ENCODE measurements at regions of chr10 and their contacts with region 1.

Region 1: GRCh38 chr10:50511492-50512213 is 112.1 kb downstream of the SGMS1 start:
- DNase-seq: peak; percentile 43 to 98
- H3K4me3 ChIP-seq: no peak overlapping the region
- H3K27ac ChIP-seq: peak overlapping the region; percentile 95
- H3K4me1 ChIP-seq: peaks cover 46% of the 10 kb centered on the region
- H3K27me3 ChIP-seq: no peaks in the 10 kb centered on the region
- CTCF ChIP-seq: no peak

Region 2: GRCh38 chr10:49362596-49363260 is 1148.9 kb before region 1 on chr10:
- CTCF ChIA-PET with region 1: no interaction called
- POLR2A ChIA-PET with region 1: no interaction called
- intact Hi-C with region 1: no loop called
- DNase-seq: no peak
- H3K4me3 ChIP-seq: no peak overlapping the region
- H3K27ac ChIP-seq: no peak overlapping the region
- H3K4me1 ChIP-seq: no peaks in the 10 kb centered on the region
- H3K27me3 ChIP-seq: peaks cover 61% of the 10 kb centered on the region
- CTCF ChIP-seq: no peak

Region 3: GRCh38 chr10:50349554-50349953 is 162.1 kb before region 1 on chr10:
- CTCF ChIA-PET with region 1: no interaction called
- POLR2A ChIA-PET with region 1: no interaction called
- intact Hi-C with region 1: no loop called
- DNase-seq: no peak
- H3K4me3 ChIP-seq: no peak overlapping the region
- H3K27ac ChIP-seq: no peak overlapping the region
- H3K4me1 ChIP-seq: no peaks in the 10 kb centered on the region
- H3K27me3 ChIP-seq: no peaks in the 10 kb centered on the region
- CTCF ChIP-seq: no peak

Region 4: DNA sequence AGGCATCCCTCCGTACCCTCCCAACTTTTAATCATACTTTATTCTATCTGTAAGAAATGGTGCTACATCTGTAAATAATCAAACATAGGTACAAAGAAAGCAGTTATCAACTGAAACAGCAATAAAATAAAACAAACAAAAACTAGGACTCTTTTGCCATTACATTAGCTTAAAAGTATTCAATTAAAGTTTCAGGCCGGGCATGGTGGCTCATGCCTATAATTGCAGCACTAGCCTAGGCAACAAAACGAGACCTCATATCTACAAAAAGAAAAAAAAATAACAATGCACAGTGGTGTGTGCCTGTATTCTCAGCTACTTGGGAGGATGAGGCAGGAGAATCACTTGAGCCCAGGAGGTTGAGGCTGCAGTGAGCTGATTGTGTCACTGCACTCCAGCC is 49.8 kb before region 1 on chr10:
- CTCF ChIA-PET with region 1: interaction called, 4 read pairs
- POLR2A ChIA-PET with region 1: interaction called, 11 read pairs
- intact Hi-C with region 1: no loop called
- DNase-seq: no peak
- H3K4me3 ChIP-seq: no peak overlapping the region
- H3K27ac ChIP-seq: no peak overlapping the region
- H3K4me1 ChIP-seq: no peaks in the 10 kb centered on the region
- H3K27me3 ChIP-seq: no peaks in the 10 kb centered on the region
- CTCF ChIP-seq: no peak

Measured in PC-9 (cell line).